CD8-positive, alpha-beta T cell (primary cell): ENCODE measurements at regions of chr7 and their contacts with region 1.

Region 1: GRCh38 chr7:143416565-143417149 is 8.0 kb upstream of the EPHA1 start:
- DNase-seq: peak in 4 of 9 experiments; percentile 23 to 72 (median 47)
- ATAC-seq: peak; percentile 69
- H3K4me3 ChIP-seq: no peak overlapping the region
- H3K4me3 Mint-ChIP-seq: no peak overlapping the region
- H3K27ac ChIP-seq: no peak overlapping the region
- H3K27ac Mint-ChIP-seq: no peak overlapping the region
- H3K4me1 ChIP-seq: peaks cover 3% of the 10 kb centered on the region
- H3K4me1 Mint-ChIP-seq: peaks cover 16% of the 10 kb centered on the region
- H3K27me3 ChIP-seq: no peaks in the 10 kb centered on the region
- H3K27me3 Mint-ChIP-seq: peaks cover 2% of the 10 kb centered on the region
- CTCF ChIP-seq: peak; percentile 80

Region 2: GRCh38 chr7:143183024-143183423 is 233.6 kb before region 1 on chr7 and contains the start of gene TAS2R39:
- CTCF ChIA-PET with region 1: no interaction called
- POLR2A ChIA-PET with region 1: no interaction called
- intact Hi-C with region 1: no loop called
- DNase-seq: no peak
- ATAC-seq: no peak
- H3K4me3 ChIP-seq: no peak within 1 kb of the TSS
- H3K4me3 Mint-ChIP-seq: no peak within 1 kb of the TSS
- H3K27ac ChIP-seq: no peak within 1 kb of the TSS
- H3K27ac Mint-ChIP-seq: no peak within 1 kb of the TSS
- H3K4me1 ChIP-seq: no peaks in the 10 kb centered on the region
- H3K4me1 Mint-ChIP-seq: no peaks in the 10 kb centered on the region
- H3K27me3 ChIP-seq: no peaks in the 10 kb centered on the region
- H3K27me3 Mint-ChIP-seq: peaks cover 15% of the 10 kb centered on the region
- CTCF ChIP-seq: no peak
- total RNA-seq, gene TAS2R39: not detected

Region 3: GRCh38 chr7:143299840-143300239 is 116.8 kb before region 1 on chr7:
- CTCF ChIA-PET with region 1: interaction called, 13 read pairs
- POLR2A ChIA-PET with region 1: no interaction called
- intact Hi-C with region 1: loop called in 1 of 2 experiments (anchors 5 kb)
- DNase-seq: peak; percentile 42 to 76 (median 69)
- ATAC-seq: peak; percentile 100
- H3K4me3 ChIP-seq: no peak overlapping the region
- H3K4me3 Mint-ChIP-seq: no peak overlapping the region
- H3K27ac ChIP-seq: no peak overlapping the region
- H3K27ac Mint-ChIP-seq: no peak overlapping the region
- H3K4me1 ChIP-seq: peaks cover 9% of the 10 kb centered on the region
- H3K4me1 Mint-ChIP-seq: peaks cover 31% of the 10 kb centered on the region
- H3K27me3 ChIP-seq: no peaks in the 10 kb centered on the region
- H3K27me3 Mint-ChIP-seq: no peaks in the 10 kb centered on the region
- CTCF ChIP-seq: peak; percentile 80

Region 4: GRCh38 chr7:143316492-143316891 is 100.2 kb before region 1 on chr7:
- CTCF ChIA-PET with region 1: no interaction called
- POLR2A ChIA-PET with region 1: no interaction called
- intact Hi-C with region 1: loop called (anchors 5 kb)
- DNase-seq: no peak
- ATAC-seq: no peak
- H3K4me3 ChIP-seq: no peak overlapping the region
- H3K4me3 Mint-ChIP-seq: no peak overlapping the region
- H3K27ac ChIP-seq: no peak overlapping the region
- H3K27ac Mint-ChIP-seq: no peak overlapping the region
- H3K4me1 ChIP-seq: no peaks in the 10 kb centered on the region
- H3K4me1 Mint-ChIP-seq: peaks cover 7% of the 10 kb centered on the region
- H3K27me3 ChIP-seq: no peaks in the 10 kb centered on the region
- H3K27me3 Mint-ChIP-seq: no peaks in the 10 kb centered on the region
- CTCF ChIP-seq: no peak

Region 5: GRCh38 chr7:143345428-143345900 is 71.2 kb before region 1 on chr7:
- CTCF ChIA-PET with region 1: interaction called, 19 read pairs
- POLR2A ChIA-PET with region 1: no interaction called
- intact Hi-C with region 1: loop called (anchors 1 to 2 kb)
- DNase-seq: peak; percentile 33 to 83 (median 65)
- ATAC-seq: peak; percentile 99
- H3K4me3 ChIP-seq: peak overlapping the region; percentile 32 to 35
- H3K4me3 Mint-ChIP-seq: peak overlapping the region; percentile 69
- H3K27ac ChIP-seq: no peak overlapping the region
- H3K27ac Mint-ChIP-seq: no peak overlapping the region
- H3K4me1 ChIP-seq: peaks cover 5% of the 10 kb centered on the region
- H3K4me1 Mint-ChIP-seq: peaks cover 9% of the 10 kb centered on the region
- H3K27me3 ChIP-seq: no peaks in the 10 kb centered on the region
- H3K27me3 Mint-ChIP-seq: peaks cover 7% of the 10 kb centered on the region
- CTCF ChIP-seq: peak; percentile 64

Region 6: DNA sequence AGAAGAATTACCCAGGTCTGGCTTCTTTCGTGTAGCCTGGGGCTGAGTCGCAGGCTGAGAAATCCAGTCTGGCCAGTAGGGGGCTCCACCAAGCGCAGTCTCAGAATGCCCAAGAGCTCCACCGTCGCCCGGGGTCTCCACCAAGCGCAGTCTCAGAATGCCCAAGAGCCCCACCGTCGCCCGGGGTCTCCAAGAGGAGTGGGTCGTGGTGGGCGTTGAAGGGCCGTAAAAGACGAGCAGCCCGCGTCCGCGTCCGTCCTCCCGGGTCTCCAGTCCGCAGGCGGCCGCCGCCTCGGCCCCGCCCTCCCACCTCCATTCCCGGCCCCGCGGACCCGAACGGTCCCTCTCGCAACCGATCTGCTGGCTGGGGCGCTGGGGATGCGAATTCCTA is 36.4 kb before region 1 on chr7:
- CTCF ChIA-PET with region 1: interaction called, 35 read pairs
- POLR2A ChIA-PET with region 1: interaction called, 6 read pairs
- intact Hi-C with region 1: loop called in 1 of 2 experiments (anchors 1 kb)
- DNase-seq: peak; percentile 82 to 94 (median 89)
- ATAC-seq: peak; percentile 42
- H3K4me3 ChIP-seq: peak overlapping the region; percentile 96 to 99
- H3K4me3 Mint-ChIP-seq: peak overlapping the region; percentile 90
- H3K27ac ChIP-seq: peak overlapping the region; percentile 84 to 95
- H3K27ac Mint-ChIP-seq: peak overlapping the region; percentile 94
- H3K4me1 ChIP-seq: peaks cover 81% of the 10 kb centered on the region
- H3K4me1 Mint-ChIP-seq: peaks cover 40% of the 10 kb centered on the region
- H3K27me3 ChIP-seq: no peaks in the 10 kb centered on the region
- H3K27me3 Mint-ChIP-seq: no peaks in the 10 kb centered on the region
- CTCF ChIP-seq: peak; percentile 61